Lower leg skin (tissue), 4 donors: ENCODE measurements at regions of chr3 and their contacts with region 1.

Region 1: GRCh38 chr3:46926871-46927717 is 49.5 kb downstream of the CCDC12 start:
- DNase-seq: no peak
- H3K4me3 ChIP-seq: no peak overlapping the region
- CTCF ChIP-seq: no peak
- POLR2A ChIP-seq: no peak

Region 2: DNA sequence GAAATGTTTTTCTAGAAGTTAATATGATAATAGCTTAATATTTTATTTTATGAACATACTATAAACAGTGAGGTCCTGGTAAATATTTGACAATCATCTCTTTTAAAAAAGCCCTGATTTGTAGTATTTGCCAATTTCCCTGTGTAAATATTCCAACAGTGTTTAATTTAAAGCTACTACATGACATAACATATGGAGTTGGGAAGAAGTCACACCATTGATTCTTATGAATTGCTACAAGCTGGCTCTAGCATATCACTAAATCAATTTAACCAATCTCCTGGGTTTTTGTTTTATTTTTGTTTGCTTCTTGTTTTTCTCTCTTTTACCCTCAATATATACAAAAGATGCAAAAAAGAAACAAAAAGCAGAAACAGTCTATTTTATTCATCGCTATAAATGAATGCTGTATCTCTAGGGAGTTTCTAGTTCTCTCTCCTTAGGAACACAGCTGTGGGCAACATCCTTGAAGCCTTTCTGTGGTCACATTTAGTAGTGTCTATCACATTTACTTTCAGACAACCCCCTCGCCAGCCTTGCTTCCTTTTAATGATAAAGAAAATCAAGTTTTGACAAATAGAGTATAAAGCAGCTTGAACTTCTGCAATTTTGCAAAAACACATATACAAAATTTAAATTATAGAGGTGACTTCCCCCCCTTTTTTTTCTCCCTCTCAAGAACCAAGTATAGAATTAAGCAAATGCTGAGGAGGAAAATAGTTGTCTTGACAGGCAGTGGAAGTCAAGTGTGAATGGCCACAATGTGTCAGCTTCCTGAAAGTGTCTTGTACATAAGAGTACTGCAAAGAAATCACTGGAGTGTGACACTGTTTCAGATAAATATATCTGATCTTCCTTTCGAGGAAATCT is 740.4 kb before region 1 on chr3:
- intact Hi-C with region 1: no loop called
- DNase-seq: no peak
- H3K4me3 ChIP-seq: no peak overlapping the region
- CTCF ChIP-seq: no peak
- POLR2A ChIP-seq: no peak

Region 3: GRCh38 chr3:46960081-46960701 is 33.1 kb after region 1 on chr3:
- intact Hi-C with region 1: no loop called
- DNase-seq: no peak
- H3K4me3 ChIP-seq: no peak overlapping the region
- CTCF ChIP-seq: no peak
- POLR2A ChIP-seq: no peak

Region 4: DNA sequence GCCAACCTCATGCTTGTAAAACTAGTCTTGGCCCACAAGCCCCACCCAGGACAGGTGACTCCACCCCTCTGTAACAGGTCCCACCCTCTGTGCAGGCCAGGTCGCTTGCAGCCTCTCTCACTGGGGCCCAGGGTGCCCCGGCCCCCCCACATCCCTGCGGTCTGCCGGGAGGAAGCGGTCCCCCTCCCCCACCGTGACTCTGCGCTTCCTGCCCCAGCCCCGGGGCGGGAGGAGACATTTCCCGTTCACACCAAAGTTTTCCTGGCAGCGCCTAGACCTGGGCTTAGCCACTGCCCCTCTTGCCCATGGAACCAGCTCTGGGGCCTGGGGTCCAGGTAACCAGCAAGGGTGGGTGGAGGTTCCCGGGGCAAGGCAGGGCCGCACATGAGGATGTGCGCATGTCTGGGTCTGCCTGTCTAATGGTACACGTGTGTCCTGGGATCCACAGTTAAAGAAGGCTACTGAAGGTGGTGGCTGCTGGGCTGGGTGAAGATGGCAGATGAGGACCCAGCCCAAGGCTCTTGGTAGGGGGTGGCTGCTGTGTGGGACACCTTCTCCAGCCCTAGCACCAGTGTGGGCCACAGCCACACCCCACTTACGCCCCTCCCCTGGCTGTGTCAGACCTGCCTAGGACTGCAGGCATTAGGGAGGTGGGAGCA is 60.8 kb after region 1 on chr3:
- intact Hi-C with region 1: no loop called
- DNase-seq: peak in 1 of 2 donors; percentile 92
- H3K4me3 ChIP-seq: no peak overlapping the region
- CTCF ChIP-seq: no peak
- POLR2A ChIP-seq: no peak

Region 5: GRCh38 chr3:47002171-47003055 is 75.3 kb after region 1 on chr3:
- intact Hi-C with region 1: loop called (anchors 5 kb)
- DNase-seq: peak in 1 of 2 donors; percentile 85
- H3K4me3 ChIP-seq: no peak overlapping the region
- CTCF ChIP-seq: no peak
- POLR2A ChIP-seq: no peak